Esophagus squamous epithelium (tissue), 5 donors: ENCODE measurements at regions of chr2 and their contacts with region 1.

Region 1: GRCh38 chr2:44479122-44479887 is 117.6 kb downstream of the CAMKMT start:
- DNase-seq: no peak
- H3K4me3 ChIP-seq: no peak overlapping the region
- H3K27ac ChIP-seq: no peak overlapping the region
- H3K4me1 ChIP-seq: no peaks in the 10 kb centered on the region
- H3K27me3 ChIP-seq: no peaks in the 10 kb centered on the region
- CTCF ChIP-seq: peak; percentile 87 to 99 (median 94)
- POLR2A ChIP-seq: no peak

Region 2: GRCh38 chr2:44612276-44612675 is 133.0 kb after region 1 on chr2:
- intact Hi-C with region 1: no loop called
- DNase-seq: no peak
- H3K4me3 ChIP-seq: no peak overlapping the region
- H3K27ac ChIP-seq: no peak overlapping the region
- H3K4me1 ChIP-seq: no peaks in the 10 kb centered on the region
- H3K27me3 ChIP-seq: no peaks in the 10 kb centered on the region
- CTCF ChIP-seq: no peak
- POLR2A ChIP-seq: no peak

Region 3: GRCh38 chr2:44955593-44956392 is 476.5 kb after region 1 on chr2:
- intact Hi-C with region 1: loop called (anchors 10 kb)
- DNase-seq: no peak
- H3K4me3 ChIP-seq: peak overlapping the region in 1 of 4 donors; percentile 50
- H3K27ac ChIP-seq: no peak overlapping the region
- H3K4me1 ChIP-seq: peaks cover 25 to 66% (median 25%) of the 10 kb centered on the region in 3 donors
- H3K27me3 ChIP-seq: peaks cover 4 to 98% (median 10%) of the 10 kb centered on the region in 4 donors
- CTCF ChIP-seq: peak; percentile 75 to 89 (median 85)
- POLR2A ChIP-seq: no peak